ENCODE measurements at regions of chr1 and their contacts with region 1.

Region 1: DNA sequence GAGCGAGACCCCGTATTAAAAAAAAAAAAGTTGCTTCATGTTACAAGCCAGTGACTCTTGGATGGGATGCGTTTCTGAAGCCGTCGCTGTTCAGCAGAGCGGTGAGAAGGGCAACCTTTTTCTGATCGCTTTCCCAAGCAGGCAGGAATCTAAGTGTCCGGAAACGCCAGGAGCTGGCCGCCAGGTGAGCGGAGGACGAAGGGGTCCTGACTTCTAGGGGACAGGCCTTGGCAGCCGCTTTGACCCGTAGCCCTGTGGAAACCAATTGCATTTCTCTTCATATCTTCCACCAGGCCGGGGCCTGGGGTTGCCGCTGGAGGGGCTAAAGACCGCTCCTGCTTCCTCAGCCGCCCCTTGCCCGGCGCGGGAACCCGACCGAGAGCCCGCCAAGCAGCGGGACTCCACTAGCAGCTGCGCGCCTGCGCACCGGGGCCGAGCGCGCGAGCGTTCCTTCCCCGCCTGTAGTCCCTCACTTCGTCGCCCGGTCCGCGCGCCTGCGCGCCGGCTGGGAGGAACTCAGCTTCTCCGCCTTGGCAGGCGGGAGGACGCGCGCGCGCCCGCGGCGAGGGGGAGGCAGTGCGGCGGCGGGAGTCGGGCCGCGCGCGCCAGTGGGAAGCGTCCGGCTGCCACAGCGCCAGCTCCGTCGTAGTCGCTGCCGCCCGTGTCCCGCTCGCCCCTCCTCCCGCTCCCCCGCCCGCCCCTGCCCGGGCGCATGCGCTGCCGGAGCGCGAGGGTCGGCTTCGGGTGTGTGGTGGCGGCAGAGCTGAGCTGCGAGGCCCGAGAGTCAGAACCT is at the start of gene SPEN:
- DNase-seq: peak; percentile 98
- H3K4me3 Mint-ChIP-seq: peak within 1 kb of the TSS; percentile 90
- H3K27ac Mint-ChIP-seq: peak within 1 kb of the TSS; percentile 95
- H3K4me1 Mint-ChIP-seq: peaks cover 52% of the 10 kb centered on the region
- H3K27me3 Mint-ChIP-seq: no peaks in the 10 kb centered on the region
- total RNA-seq, gene SPEN: 52.1 to 52.5 TPM

Region 2: DNA sequence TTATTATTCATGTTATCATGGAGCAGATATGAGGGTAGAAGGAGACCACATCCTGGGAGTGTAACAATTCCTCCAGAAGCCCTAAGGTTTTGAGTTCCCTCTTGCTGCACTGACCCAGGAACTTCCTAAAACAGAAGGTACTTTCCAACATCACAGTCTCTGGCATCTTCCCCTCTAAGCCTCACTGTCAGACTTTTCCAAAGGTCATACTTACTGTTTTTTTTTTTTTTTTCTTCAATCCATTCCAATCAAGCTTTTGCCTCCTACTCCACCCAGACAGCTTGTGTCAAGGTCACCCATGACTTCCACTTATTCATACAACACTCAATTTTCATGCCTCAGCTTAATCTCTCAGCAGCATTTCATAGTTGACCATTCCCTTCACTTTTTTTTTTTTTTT is 21.5 kb before region 1 on chr1:
- CTCF ChIA-PET with region 1: interaction called, 3 read pairs
- POLR2A ChIA-PET with region 1: interaction called, 235 read pairs
- DNase-seq: no peak
- H3K4me3 Mint-ChIP-seq: no peak overlapping the region
- H3K27ac Mint-ChIP-seq: no peak overlapping the region
- H3K4me1 Mint-ChIP-seq: peaks cover 32% of the 10 kb centered on the region
- H3K27me3 Mint-ChIP-seq: no peaks in the 10 kb centered on the region

Region 3: DNA sequence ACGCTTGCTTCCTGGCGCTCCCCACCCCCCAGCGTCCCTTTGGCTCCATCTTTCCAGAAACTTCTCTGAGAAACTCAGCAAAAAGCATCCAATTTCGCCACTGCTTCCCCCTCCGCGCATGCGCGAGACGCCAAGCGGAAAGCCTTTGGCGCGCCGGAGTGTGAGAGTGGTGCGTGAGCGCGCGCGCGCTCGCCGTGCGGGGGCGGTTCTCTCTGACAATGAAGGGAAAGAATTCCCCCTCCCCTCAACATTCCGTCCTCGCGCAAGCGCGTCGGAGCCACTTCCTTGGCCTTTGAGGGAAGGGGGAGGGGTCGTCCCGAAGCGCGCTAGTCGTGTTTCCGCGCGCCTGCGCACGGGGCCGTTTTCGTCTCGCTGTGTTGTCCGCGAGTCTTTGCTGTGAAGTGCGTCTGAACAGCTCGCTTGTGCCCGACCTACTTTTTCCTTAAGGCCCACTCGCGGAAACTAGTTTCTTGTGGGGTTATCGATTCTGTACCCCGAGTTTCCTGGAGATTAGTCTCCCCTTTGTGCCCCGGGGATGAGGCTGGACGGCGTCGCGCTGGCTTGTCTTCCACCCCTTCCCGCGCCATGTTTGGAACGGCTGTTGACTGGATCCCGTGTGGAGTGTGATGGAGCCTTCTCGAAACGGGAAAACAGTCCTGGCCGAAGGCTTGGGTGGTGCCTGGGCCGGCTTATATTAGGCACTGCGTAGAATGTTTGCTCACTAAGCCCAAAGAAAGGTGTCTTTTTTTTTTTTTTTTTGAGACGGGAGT is 11.4 kb before region 1 on chr1:
- CTCF ChIA-PET with region 1: interaction called, 32 read pairs
- POLR2A ChIA-PET with region 1: interaction called, 235 read pairs
- DNase-seq: peak; percentile 99
- H3K4me3 Mint-ChIP-seq: peak overlapping the region; percentile 86
- H3K27ac Mint-ChIP-seq: peak overlapping the region; percentile 94
- H3K4me1 Mint-ChIP-seq: peaks cover 31% of the 10 kb centered on the region
- H3K27me3 Mint-ChIP-seq: no peaks in the 10 kb centered on the region

Region 4: GRCh38 chr1:15858069-15858670 is 10.9 kb after region 1 on chr1:
- CTCF ChIA-PET with region 1: interaction called, 9 read pairs
- POLR2A ChIA-PET with region 1: interaction called, 10 read pairs
- DNase-seq: no peak
- H3K4me3 Mint-ChIP-seq: no peak overlapping the region
- H3K27ac Mint-ChIP-seq: peak overlapping the region; percentile 46
- H3K4me1 Mint-ChIP-seq: peaks cover 12% of the 10 kb centered on the region
- H3K27me3 Mint-ChIP-seq: no peaks in the 10 kb centered on the region

Region 5: GRCh38 chr1:15900662-15901279 is 53.5 kb after region 1 on chr1:
- CTCF ChIA-PET with region 1: no interaction called
- POLR2A ChIA-PET with region 1: no interaction called
- DNase-seq: no peak
- H3K4me3 Mint-ChIP-seq: no peak overlapping the region
- H3K27ac Mint-ChIP-seq: no peak overlapping the region
- H3K4me1 Mint-ChIP-seq: peaks cover 21% of the 10 kb centered on the region
- H3K27me3 Mint-ChIP-seq: no peaks in the 10 kb centered on the region

Measured in activated CD4-positive, alpha-beta memory T cell treated with anti-CD3 and anti-CD28 coated beads, Interleukin-2, amount 10 ng/mL, durations not matched to agents 7 days and 5 days (primary cell).